Mammary epithelial cell (primary cell): ENCODE measurements at regions of chr16 and their contacts with region 1.

Region 1: GRCh38 chr16:11742539-11743307 is at the start of gene TXNDC11:
- DNase-seq: peak; percentile 98
- H3K4me3 ChIP-seq: peak within 1 kb of the TSS; percentile 63 to 93 (median 88)
- H3K27ac ChIP-seq: peak within 1 kb of the TSS; percentile 85
- H3K4me1 ChIP-seq: peaks cover 18% of the 10 kb centered on the region
- H3K27me3 ChIP-seq: no peaks in the 10 kb centered on the region
- CTCF ChIP-seq: no peak
- total RNA-seq, gene TXNDC11: 26.0 to 30.7 TPM

Region 2: GRCh38 chr16:11768849-11769248 is 26.1 kb after region 1 on chr16:
- CTCF ChIA-PET with region 1: no interaction called
- dilution Hi-C with region 1: no loop called
- in situ Hi-C with region 1: no loop called
- intact Hi-C with region 1: no loop called
- DNase-seq: no peak
- H3K4me3 ChIP-seq: no peak overlapping the region
- H3K27ac ChIP-seq: no peak overlapping the region
- H3K4me1 ChIP-seq: no peaks in the 10 kb centered on the region
- H3K27me3 ChIP-seq: no peaks in the 10 kb centered on the region
- CTCF ChIP-seq: no peak

Region 3: GRCh38 chr16:11783319-11784037 is 40.8 kb after region 1 on chr16:
- CTCF ChIA-PET with region 1: no interaction called
- dilution Hi-C with region 1: no loop called
- in situ Hi-C with region 1: no loop called
- intact Hi-C with region 1: loop called (anchors 2 kb)
- DNase-seq: peak; percentile 58
- H3K4me3 ChIP-seq: peak overlapping the region in 2 of 3 experiments; percentile 12 to 35
- H3K27ac ChIP-seq: peak overlapping the region; percentile 92
- H3K4me1 ChIP-seq: peaks cover 34% of the 10 kb centered on the region
- H3K27me3 ChIP-seq: no peaks in the 10 kb centered on the region
- CTCF ChIP-seq: no peak

Region 4: DNA sequence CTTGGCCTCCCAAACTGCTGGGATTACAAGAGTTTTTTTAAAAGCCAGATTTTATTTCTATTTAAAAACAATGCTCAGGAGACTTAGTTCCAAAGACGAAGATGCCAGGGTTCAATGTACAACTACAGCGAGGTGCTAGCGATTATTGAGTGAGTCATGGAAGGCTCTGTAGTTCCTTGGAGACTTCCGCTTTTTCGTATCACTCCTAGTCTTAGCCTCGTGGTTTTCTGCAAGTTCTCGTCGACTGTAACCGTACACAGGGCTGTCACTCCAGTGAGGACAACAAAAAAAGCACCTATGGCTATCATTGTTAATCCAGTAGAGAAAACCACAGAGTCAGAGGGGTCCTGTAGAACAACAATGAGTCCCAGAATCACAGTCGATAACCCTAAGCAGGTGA is 77.1 kb after region 1 on chr16:
- CTCF ChIA-PET with region 1: no interaction called
- dilution Hi-C with region 1: loop called (anchors 5 kb)
- in situ Hi-C with region 1: no loop called
- intact Hi-C with region 1: no loop called
- DNase-seq: no peak
- H3K4me3 ChIP-seq: no peak overlapping the region
- H3K27ac ChIP-seq: no peak overlapping the region
- H3K4me1 ChIP-seq: no peaks in the 10 kb centered on the region
- H3K27me3 ChIP-seq: no peaks in the 10 kb centered on the region
- CTCF ChIP-seq: no peak

Region 5: GRCh38 chr16:11851294-11852091 is 108.8 kb after region 1 on chr16 and contains the start of gene RSL1D1:
- CTCF ChIA-PET with region 1: no interaction called
- dilution Hi-C with region 1: no loop called
- in situ Hi-C with region 1: no loop called
- intact Hi-C with region 1: no loop called
- DNase-seq: peak; percentile 94
- H3K4me3 ChIP-seq: peak within 1 kb of the TSS; percentile 77 to 100 (median 87)
- H3K27ac ChIP-seq: peak within 1 kb of the TSS; percentile 70
- H3K4me1 ChIP-seq: peaks cover 11% of the 10 kb centered on the region
- H3K27me3 ChIP-seq: no peaks in the 10 kb centered on the region
- CTCF ChIP-seq: no peak
- total RNA-seq, gene RSL1D1: 127 to 209 TPM